Panc1 (cell line): ENCODE measurements at regions of chr12 and their contacts with region 1.

Region 1: DNA sequence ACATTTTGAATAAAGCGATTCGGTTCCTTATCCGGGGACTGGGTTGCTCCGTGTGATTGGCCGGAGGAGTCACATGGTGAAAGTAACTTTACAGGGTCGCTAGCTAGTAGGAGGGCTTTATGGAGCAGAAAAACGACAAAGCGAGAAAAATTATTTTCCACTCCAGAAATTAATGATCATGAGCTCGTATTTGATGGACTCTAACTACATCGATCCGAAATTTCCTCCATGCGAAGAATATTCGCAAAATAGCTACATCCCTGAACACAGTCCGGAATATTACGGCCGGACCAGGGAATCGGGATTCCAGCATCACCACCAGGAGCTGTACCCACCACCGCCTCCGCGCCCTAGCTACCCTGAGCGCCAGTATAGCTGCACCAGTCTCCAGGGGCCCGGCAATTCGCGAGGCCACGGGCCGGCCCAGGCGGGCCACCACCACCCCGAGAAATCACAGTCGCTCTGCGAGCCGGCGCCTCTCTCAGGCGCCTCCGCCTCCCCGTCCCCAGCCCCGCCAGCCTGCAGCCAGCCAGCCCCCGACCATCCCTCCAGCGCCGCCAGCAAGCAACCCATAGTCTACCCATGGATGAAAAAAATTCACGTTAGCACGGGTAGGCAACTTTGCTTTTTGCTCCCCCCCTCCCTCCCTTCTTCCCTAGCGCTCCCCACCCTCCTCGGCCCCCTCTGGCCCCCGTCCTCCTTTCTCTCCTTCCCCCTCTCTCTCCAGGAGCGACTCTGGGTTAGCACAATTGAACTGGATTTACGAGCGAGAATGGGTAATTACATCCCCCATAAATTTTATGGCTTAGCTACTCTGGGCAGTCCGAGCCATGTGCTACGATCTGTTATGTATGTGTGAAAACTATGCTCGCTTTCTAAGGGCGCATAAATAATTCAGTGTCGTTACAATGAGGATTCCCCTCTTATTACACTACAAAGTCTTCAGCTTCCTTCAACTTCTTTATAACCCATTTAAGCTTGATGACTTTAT is at the start of gene HOXC4:
- DNase-seq: no peak
- ATAC-seq: no peak
- H3K4me3 ChIP-seq: peak within 1 kb of the TSS in 1 of 2 experiments; percentile 33; a peak in 1 of 4 replicates
- H3K27ac ChIP-seq: peak within 1 kb of the TSS; percentile 39; the same call in 1 of the 2 replicates
- H3K4me1 ChIP-seq: peaks cover 52% of the 10 kb centered on the region
- H3K27me3 ChIP-seq: no peaks in the 10 kb centered on the region
- CTCF ChIP-seq: no peak
- total RNA-seq, gene HOXC4: 22.7 TPM

Region 2: GRCh38 chr12:54025499-54026405 is 28.3 kb before region 1 on chr12:
- CTCF ChIA-PET with region 1: no interaction called
- POLR2A ChIA-PET with region 1: interaction called, 10 read pairs
- in situ Hi-C with region 1: no loop called
- intact Hi-C with region 1: no loop called
- DNase-seq: no peak
- ATAC-seq: no peak
- H3K4me3 ChIP-seq: peak overlapping the region; percentile 9 to 39; a peak in 3 of 4 replicates
- H3K27ac ChIP-seq: peak overlapping the region; percentile 95
- H3K4me1 ChIP-seq: peaks cover 93% of the 10 kb centered on the region
- H3K27me3 ChIP-seq: no peaks in the 10 kb centered on the region
- CTCF ChIP-seq: peak; percentile 11